Activated naive CD4-positive, alpha-beta T cell treated with anti-CD3 and anti-CD28 coated beads for 36 hours (primary cell): ENCODE measurements at regions of chr3 and their contacts with region 1.

Region 1: DNA sequence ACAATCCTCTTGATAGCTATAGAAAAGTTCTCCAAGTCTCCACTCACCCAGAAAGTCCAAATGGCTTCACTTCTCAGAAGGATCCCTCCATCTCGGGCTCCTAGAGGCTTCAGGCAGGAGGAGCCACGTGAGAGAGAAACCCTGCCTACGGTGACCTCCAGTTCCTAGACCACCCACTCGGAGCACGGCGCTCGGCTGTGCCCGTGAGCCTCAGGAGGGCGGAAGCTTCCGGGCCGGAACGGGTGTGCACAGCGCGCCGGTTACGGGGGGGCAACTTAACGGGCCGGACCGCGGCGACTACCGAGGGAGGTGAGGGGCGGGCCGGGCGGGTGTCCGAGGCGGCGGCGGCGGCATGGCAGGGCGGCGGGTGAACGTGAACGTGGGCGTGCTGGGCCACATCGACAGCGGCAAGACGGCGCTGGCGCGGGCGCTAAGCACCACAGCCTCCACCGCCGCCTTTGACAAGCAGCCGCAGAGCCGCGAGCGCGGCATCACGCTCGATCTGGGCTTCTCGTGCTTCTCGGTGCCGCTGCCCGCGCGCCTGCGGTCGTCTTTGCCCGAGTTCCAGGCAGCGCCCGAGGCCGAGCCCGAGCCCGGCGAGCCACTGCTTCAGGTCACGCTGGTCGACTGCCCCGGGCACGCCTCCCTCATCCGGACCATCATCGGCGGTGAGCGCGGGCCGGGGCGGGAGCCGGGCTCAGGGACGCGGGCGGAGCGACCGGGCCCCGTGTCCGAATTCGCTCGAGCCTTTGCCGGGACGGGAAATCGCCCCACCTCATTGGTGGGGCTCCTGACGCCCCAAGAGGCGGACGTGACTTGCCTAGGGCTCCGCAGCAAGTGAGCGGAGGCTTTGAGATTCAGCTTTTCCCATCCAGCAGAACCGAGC is at the start of gene EEFSEC:
- DNase-seq: peak; percentile 87
- H3K4me3 Mint-ChIP-seq: peak within 1 kb of the TSS; percentile 89
- H3K27ac Mint-ChIP-seq: peak within 1 kb of the TSS; percentile 90
- H3K4me1 Mint-ChIP-seq: peaks cover 27% of the 10 kb centered on the region
- H3K27me3 Mint-ChIP-seq: no peaks in the 10 kb centered on the region
- total RNA-seq, gene EEFSEC: 11.0 to 11.6 TPM

Region 2: GRCh38 chr3:128051837-128052594 is 101.4 kb before region 1 on chr3 and contains the start of gene SEC61A1:
- CTCF ChIA-PET with region 1: no interaction called
- intact Hi-C with region 1: loop called (anchors 1 kb)
- DNase-seq: peak; percentile 95
- H3K4me3 Mint-ChIP-seq: peak within 1 kb of the TSS; percentile 91
- H3K27ac Mint-ChIP-seq: peak within 1 kb of the TSS; percentile 95
- H3K4me1 Mint-ChIP-seq: peaks cover 40% of the 10 kb centered on the region
- H3K27me3 Mint-ChIP-seq: peaks cover under 1% of the 10 kb centered on the region
- total RNA-seq, gene SEC61A1: 115 to 119 TPM

Region 3: GRCh38 chr3:128112357-128112968 is 40.9 kb before region 1 on chr3:
- CTCF ChIA-PET with region 1: no interaction called
- intact Hi-C with region 1: loop called (anchors 5 kb)
- DNase-seq: peak; percentile 59
- H3K4me3 Mint-ChIP-seq: no peak overlapping the region
- H3K27ac Mint-ChIP-seq: peak overlapping the region; percentile 79
- H3K4me1 Mint-ChIP-seq: peaks cover 38% of the 10 kb centered on the region
- H3K27me3 Mint-ChIP-seq: no peaks in the 10 kb centered on the region

Region 4: GRCh38 chr3:128297401-128298138 is 144.2 kb after region 1 on chr3:
- CTCF ChIA-PET with region 1: no interaction called
- intact Hi-C with region 1: loop called (anchors 1 kb)
- DNase-seq: no peak
- H3K4me3 Mint-ChIP-seq: no peak overlapping the region
- H3K27ac Mint-ChIP-seq: no peak overlapping the region
- H3K4me1 Mint-ChIP-seq: peaks cover 48% of the 10 kb centered on the region
- H3K27me3 Mint-ChIP-seq: no peaks in the 10 kb centered on the region

Region 5: GRCh38 chr3:128497387-128498126 is 344.2 kb after region 1 on chr3:
- CTCF ChIA-PET with region 1: no interaction called
- intact Hi-C with region 1: loop called (anchors 10 kb)
- DNase-seq: peak; percentile 74
- H3K4me3 Mint-ChIP-seq: peak overlapping the region; percentile 68
- H3K27ac Mint-ChIP-seq: no peak overlapping the region
- H3K4me1 Mint-ChIP-seq: peaks cover 3% of the 10 kb centered on the region
- H3K27me3 Mint-ChIP-seq: peaks cover 49% of the 10 kb centered on the region